CD4-positive, alpha-beta memory T cell (primary cell): ENCODE measurements at regions of chr11 and their contacts with region 1.

Region 1: GRCh38 chr11:128323381-128323780 is 264.0 kb downstream of the ETS1 start:
- DNase-seq: peak; percentile 60 to 70 (median 68)
- H3K4me3 ChIP-seq: peak overlapping the region in 1 of 2 donors; percentile 17
- H3K4me3 Mint-ChIP-seq: peak overlapping the region in 7 of 8 donors; percentile 28 to 78 (median 63)
- H3K27ac ChIP-seq: peak overlapping the region; percentile 92
- H3K27ac Mint-ChIP-seq: peak overlapping the region; percentile 87 to 99 (median 97)
- H3K4me1 ChIP-seq: peaks cover 83% of the 10 kb centered on the region
- H3K4me1 Mint-ChIP-seq: peaks cover 65 to 92% (median 79%) of the 10 kb centered on the region in 4 donors
- H3K27me3 ChIP-seq: no peaks in the 10 kb centered on the region
- H3K27me3 Mint-ChIP-seq: no peaks in the 10 kb centered on the region

Region 2: DNA sequence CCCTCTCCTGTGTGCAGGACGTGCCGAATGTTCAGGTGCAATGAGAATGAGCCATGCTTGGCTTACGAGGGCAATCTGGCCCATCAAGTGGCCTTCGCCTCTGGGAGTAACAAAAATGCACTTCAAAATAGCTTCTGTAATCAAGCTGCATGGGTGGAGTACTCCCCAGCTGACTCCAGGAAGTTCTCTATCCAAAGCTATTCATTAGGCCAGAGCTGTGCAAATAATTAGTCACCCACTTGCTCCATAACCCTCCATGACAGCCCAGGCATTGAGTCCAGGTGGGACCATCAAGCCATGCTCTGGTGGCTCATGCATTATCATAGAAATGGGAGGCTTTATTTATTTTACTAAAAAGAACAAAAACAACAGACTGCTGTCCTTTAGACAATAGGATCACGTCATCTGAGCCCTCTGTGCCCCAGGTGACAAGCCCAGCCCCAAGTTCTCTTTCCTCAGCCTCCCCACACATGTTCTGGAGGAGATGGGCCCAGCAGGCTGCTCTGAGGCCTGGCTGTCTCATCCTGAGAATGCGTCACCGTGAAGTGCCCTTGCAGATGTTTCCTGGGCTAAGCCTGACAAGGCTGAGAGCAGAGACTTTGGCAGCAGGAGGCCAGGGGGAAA is 19.2 kb after region 1 on chr11:
- CTCF ChIA-PET with region 1: interaction called, 19 read pairs
- POLR2A ChIA-PET with region 1: interaction called, 137 read pairs
- intact Hi-C with region 1: loop called (anchors 1 kb)
- DNase-seq: peak; percentile 61 to 92 (median 66)
- H3K4me3 ChIP-seq: peak overlapping the region in 1 of 2 donors; percentile 25
- H3K4me3 Mint-ChIP-seq: peak overlapping the region in 7 of 8 donors; percentile 64 to 90 (median 83)
- H3K27ac ChIP-seq: peak overlapping the region; percentile 85
- H3K27ac Mint-ChIP-seq: peak overlapping the region; percentile 96 to 100 (median 99)
- H3K4me1 ChIP-seq: peaks cover 87% of the 10 kb centered on the region
- H3K4me1 Mint-ChIP-seq: peaks cover 70 to 99% (median 86%) of the 10 kb centered on the region in 4 donors
- H3K27me3 ChIP-seq: no peaks in the 10 kb centered on the region
- H3K27me3 Mint-ChIP-seq: no peaks in the 10 kb centered on the region

Region 3: GRCh38 chr11:128422576-128423370 is 99.4 kb after region 1 on chr11:
- CTCF ChIA-PET with region 1: no interaction called
- POLR2A ChIA-PET with region 1: interaction called, 10 read pairs
- intact Hi-C with region 1: loop called (anchors 2 kb)
- DNase-seq: peak; percentile 84 to 95 (median 90)
- H3K4me3 ChIP-seq: peak overlapping the region in 1 of 2 donors; percentile 28
- H3K4me3 Mint-ChIP-seq: peak overlapping the region; percentile 48 to 81 (median 72)
- H3K27ac ChIP-seq: peak overlapping the region; percentile 50
- H3K27ac Mint-ChIP-seq: peak overlapping the region; percentile 97 to 100 (median 98)
- H3K4me1 ChIP-seq: peaks cover 26% of the 10 kb centered on the region
- H3K4me1 Mint-ChIP-seq: peaks cover 31 to 45% (median 40%) of the 10 kb centered on the region in 4 donors
- H3K27me3 ChIP-seq: no peaks in the 10 kb centered on the region
- H3K27me3 Mint-ChIP-seq: no peaks in the 10 kb centered on the region

Region 4: DNA sequence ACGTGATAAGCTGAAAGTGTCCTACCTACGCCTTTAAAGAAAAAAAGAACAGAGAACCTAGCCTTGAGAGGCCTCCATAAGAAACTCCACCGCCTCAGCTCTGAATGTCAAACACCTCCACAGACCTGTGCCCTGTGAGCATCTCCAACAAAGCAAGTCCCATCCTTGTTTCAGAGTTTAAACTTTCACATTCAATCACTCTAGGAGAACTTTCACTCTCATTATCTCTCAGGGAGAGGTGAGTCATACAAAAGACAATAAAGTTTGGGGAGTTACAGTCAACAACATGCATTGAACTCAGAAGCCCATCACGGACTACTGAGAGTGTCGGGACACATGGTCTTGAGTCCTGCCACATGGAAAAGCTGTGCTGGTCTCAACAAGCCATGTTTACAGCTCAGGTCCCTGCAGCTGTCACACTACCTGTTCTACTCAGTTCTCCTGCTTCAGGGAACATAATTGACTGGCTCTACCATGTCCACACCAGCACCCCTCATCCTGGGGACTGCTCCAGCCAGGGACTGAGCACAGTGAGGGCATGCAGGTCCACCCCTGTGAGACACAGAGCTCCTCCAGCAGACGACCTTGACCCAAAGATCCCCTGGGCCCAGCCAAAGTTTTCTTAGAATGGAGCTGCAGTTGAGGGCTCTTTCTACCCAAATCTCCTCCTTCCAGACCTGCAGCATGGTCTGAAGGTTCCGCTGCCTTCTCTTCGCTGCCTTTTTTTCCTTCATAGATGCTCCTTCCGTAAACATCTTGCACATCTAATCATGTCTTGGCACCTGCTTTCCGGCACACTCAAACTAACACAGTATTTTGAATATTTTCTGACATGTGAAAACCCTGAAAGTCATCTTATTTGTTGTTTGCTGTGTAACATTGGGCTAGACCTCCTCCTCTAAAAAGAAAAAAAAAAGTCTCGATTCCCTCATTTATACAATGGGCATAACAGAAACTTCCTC is 149.0 kb after region 1 on chr11:
- CTCF ChIA-PET with region 1: interaction called, 24 read pairs
- POLR2A ChIA-PET with region 1: interaction called, 436 read pairs
- intact Hi-C with region 1: loop called (anchors 1 kb)
- DNase-seq: peak in 4 of 5 donors; percentile 51 to 82 (median 57)
- H3K4me3 ChIP-seq: peak overlapping the region; percentile 5 to 27
- H3K4me3 Mint-ChIP-seq: peak overlapping the region; percentile 70 to 93 (median 84)
- H3K27ac ChIP-seq: peak overlapping the region; percentile 94
- H3K27ac Mint-ChIP-seq: peak overlapping the region; percentile 98 to 99 (median 99)
- H3K4me1 ChIP-seq: peaks cover 100% of the 10 kb centered on the region
- H3K4me1 Mint-ChIP-seq: peaks cover 85 to 98% (median 92%) of the 10 kb centered on the region in 4 donors
- H3K27me3 ChIP-seq: no peaks in the 10 kb centered on the region
- H3K27me3 Mint-ChIP-seq: no peaks in the 10 kb centered on the region

Region 5: DNA sequence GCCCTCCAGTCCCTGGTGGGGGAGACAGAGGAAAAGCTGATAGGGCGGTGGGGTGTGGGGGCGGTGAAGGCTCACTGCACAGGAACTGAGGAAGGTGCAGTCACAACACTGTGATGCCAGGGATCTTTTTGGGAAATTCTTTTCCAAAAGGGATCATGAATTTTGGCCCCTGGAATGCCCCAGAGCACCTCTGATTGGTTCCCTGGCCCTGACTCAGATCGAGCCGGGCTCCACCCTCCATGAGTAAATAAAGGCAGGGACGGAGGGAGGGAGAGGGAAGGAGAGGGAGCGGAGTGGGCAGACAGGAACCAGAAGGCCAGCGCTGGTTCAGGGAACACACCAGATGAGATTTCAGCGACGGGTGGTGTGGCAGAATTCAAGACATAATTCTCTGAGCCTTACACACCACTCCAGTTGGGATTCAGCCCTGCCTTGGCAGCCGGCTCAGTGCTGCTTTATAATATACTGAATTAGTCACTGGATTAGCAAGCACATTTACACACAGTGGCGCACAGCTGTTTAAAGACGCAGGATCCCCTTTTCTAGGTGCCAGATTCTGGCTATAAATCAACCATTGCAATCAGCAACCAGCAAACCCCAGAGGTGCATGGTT is 183.7 kb after region 1 on chr11:
- CTCF ChIA-PET with region 1: interaction called, 18 read pairs
- POLR2A ChIA-PET with region 1: interaction called, 490 read pairs
- intact Hi-C with region 1: loop called (anchors 2 kb)
- DNase-seq: peak in 1 of 5 donors; percentile 77
- H3K4me3 ChIP-seq: peak overlapping the region; percentile 37 to 39
- H3K4me3 Mint-ChIP-seq: peak overlapping the region; percentile 81 to 100 (median 94)
- H3K27ac ChIP-seq: peak overlapping the region; percentile 89
- H3K27ac Mint-ChIP-seq: peak overlapping the region; percentile 92 to 99 (median 98)
- H3K4me1 ChIP-seq: peaks cover 100% of the 10 kb centered on the region
- H3K4me1 Mint-ChIP-seq: peaks cover 80 to 100% (median 89%) of the 10 kb centered on the region in 4 donors
- H3K27me3 ChIP-seq: no peaks in the 10 kb centered on the region
- H3K27me3 Mint-ChIP-seq: no peaks in the 10 kb centered on the region